Aorta (tissue), 5 donors: ENCODE measurements at regions of chr6 and their contacts with region 1.

Region 1: DNA sequence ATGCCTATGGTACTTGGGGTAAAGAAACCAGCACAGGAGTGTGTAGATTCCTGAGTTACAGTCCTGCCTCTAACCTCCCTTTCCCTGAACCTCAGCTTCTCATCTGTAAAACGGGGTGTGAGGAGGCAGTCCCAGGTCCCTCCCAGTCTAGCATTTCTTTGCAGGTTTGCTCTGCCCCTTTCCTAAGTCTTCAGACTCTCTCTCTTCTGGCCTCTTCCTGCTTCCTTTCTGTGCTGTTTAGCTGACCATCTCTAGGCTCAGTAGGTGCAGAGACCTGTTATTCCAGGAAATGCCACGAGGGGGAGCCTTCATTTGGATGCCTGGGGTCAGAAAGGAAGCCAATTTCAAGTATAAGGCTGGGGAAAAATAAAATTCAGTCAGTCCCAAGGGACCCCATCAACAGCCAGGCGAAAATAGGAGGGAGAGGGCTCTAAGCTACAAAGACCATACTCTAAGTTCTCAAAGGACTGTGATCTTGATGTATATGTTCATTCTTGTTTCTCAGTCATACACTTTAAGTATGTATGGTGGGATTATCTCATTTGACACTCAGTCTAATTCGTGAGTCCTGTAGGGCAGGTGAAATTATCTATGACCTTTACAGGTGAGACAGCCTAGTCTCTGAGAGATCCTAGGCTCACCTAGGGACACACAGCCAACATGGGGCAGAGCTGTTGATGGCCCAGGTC is 89.1 kb downstream of the NCR2 start:
- DNase-seq: peak; percentile 86 to 90
- ATAC-seq: peak; percentile 45
- H3K4me3 ChIP-seq: no peak overlapping the region
- H3K27ac ChIP-seq: no peak overlapping the region
- H3K4me1 ChIP-seq: no peaks in the 10 kb centered on the region
- H3K27me3 ChIP-seq: no peaks in the 10 kb centered on the region

Region 2: DNA sequence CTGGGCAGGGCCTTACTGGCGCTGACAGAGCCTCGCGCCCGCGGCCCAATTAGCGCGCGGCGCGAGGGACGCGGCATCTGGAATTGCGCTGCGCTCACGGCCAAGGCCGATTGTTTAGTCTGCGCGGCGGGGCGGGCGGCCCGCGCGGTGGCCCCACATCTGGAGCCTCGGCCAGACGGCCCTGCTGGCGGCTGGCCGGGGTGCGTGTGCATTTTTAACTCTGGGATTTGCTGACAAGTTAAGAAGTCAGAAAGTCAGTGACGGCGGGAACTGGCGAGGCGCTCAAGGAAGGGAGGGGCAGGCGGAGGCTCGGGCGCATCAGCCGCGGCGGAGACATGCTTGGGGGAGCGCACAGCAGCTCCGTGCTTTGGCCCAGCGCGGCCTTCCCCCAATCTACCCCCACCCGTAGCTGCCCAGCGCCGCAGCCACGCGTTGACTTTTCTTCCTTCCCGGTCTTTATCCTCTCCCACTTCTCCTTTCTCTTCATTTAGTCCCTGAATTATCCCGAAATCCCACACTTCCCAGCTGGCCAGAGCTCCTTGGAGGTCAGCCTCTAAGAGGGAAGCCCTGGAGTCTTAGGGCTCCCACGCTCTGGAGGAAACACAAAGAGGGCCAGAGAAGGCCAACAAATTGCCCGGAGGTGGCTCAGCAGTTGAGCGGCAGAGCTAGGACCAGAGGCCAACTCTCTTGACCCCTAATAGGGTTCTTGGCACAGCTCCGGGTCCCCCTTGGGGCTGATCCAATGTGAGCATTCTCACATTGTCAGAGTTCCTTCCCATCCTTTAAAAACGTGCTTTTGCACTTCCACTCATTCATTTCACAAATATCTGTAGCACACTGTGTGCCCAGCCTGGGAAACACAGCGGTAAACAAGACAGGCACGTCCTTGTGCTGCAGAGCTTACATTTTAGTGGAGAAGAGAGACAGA is 80.9 kb after region 1 on chr6:
- intact Hi-C with region 1: loop called (anchors 5 to 10 kb)
- DNase-seq: peak; percentile 93 to 95
- ATAC-seq: peak; percentile 89
- H3K4me3 ChIP-seq: peak overlapping the region in 1 of 2 donors; percentile 23
- H3K27ac ChIP-seq: peak overlapping the region in 1 of 2 donors; percentile 50
- H3K4me1 ChIP-seq: no peaks in the 10 kb centered on the region
- H3K27me3 ChIP-seq: no peaks in the 10 kb centered on the region